CD8-positive, alpha-beta T cell (primary cell): ENCODE measurements at regions of chrX and their contacts with region 1.

Region 1: GRCh38 chrX:132488819-132489577 is at the start of gene MBNL3:
- DNase-seq: peak; percentile 47 to 85 (median 70)
- ATAC-seq: peak; percentile 71
- H3K4me3 ChIP-seq: peak within 1 kb of the TSS; percentile 61 to 77
- H3K4me3 Mint-ChIP-seq: peak within 1 kb of the TSS; percentile 95
- H3K27ac ChIP-seq: peak within 1 kb of the TSS; percentile 66 to 83
- H3K27ac Mint-ChIP-seq: peak within 1 kb of the TSS; percentile 96
- H3K4me1 ChIP-seq: peaks cover 34% of the 10 kb centered on the region
- H3K4me1 Mint-ChIP-seq: peaks cover 52% of the 10 kb centered on the region
- H3K27me3 ChIP-seq: no peaks in the 10 kb centered on the region
- H3K27me3 Mint-ChIP-seq: no peaks in the 10 kb centered on the region
- CTCF ChIP-seq: no peak
- total RNA-seq, gene MBNL3: 18.5 to 22.0 TPM

Region 2: DNA sequence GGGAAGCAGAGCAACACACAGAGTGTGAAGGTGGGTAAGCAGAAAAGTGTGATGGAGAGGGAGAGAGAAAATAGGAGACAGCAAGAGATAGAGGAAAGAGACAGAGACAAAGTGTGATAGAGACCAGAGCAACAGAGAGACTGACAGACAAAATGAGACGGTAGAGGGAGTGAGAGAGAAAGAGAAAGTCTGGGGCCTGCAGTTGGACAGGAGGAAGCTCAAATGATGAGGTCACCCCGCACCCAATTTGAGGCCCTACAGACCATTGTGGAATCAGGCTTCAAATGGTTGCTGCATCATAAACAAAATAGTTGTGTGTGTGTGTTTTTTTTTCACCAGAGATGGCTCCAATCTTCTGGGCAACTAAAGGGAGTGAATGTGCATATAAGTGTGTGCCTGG is 1478.8 kb before region 1 on chrX:
- CTCF ChIA-PET with region 1: no interaction called
- POLR2A ChIA-PET with region 1: no interaction called
- intact Hi-C with region 1: no loop called
- DNase-seq: no peak
- ATAC-seq: no peak
- H3K4me3 ChIP-seq: no peak overlapping the region
- H3K4me3 Mint-ChIP-seq: no peak overlapping the region
- H3K27ac ChIP-seq: no peak overlapping the region
- H3K27ac Mint-ChIP-seq: no peak overlapping the region
- H3K4me1 ChIP-seq: no peaks in the 10 kb centered on the region
- H3K4me1 Mint-ChIP-seq: no peaks in the 10 kb centered on the region
- H3K27me3 ChIP-seq: no peaks in the 10 kb centered on the region
- H3K27me3 Mint-ChIP-seq: no peaks in the 10 kb centered on the region
- CTCF ChIP-seq: no peak

Region 3: GRCh38 chrX:131854581-131854980 is 634.4 kb before region 1 on chrX:
- CTCF ChIA-PET with region 1: no interaction called
- POLR2A ChIA-PET with region 1: no interaction called
- intact Hi-C with region 1: loop called in 1 of 2 experiments (anchors 10 kb)
- DNase-seq: peak in 2 of 9 experiments; percentile 38 to 50
- ATAC-seq: no peak
- H3K4me3 ChIP-seq: no peak overlapping the region
- H3K4me3 Mint-ChIP-seq: no peak overlapping the region
- H3K27ac ChIP-seq: no peak overlapping the region
- H3K27ac Mint-ChIP-seq: no peak overlapping the region
- H3K4me1 ChIP-seq: no peaks in the 10 kb centered on the region
- H3K4me1 Mint-ChIP-seq: no peaks in the 10 kb centered on the region
- H3K27me3 ChIP-seq: no peaks in the 10 kb centered on the region
- H3K27me3 Mint-ChIP-seq: no peaks in the 10 kb centered on the region
- CTCF ChIP-seq: no peak

Region 4: DNA sequence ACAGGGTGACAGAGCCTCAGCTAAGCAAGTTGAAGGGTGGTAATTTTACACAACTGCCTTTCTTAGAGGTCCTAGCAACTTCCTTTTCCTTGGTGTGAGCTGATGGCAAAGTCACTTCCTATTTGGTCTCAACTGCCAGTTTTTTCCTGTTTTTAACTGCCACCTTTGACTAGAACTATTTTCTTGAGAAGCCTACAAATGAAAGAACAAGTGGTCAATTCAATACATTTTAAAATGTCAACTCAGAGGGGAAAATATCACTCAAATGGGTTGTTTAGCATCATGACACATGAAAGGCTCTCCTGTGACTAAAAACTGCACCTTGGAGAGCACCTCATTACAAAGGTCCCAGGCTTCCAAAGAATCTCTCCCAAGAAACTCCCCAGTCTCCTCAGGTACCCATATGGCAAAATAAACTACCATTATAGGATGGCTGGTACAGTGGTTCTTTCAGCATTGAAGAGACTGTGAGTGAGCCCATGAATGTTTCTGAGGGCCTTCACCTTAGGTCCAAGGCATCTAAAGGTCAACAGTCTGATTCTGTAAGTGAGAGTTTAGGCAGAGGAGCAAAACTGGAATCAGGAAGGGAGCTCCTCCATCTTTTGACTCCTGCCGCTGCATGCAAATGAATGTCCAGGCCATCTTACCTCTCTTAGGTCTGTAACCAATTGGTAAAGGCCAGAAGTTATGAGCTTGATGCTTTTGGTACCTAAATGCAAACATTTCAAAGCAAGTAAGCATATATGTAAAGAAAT is 471.4 kb before region 1 on chrX:
- CTCF ChIA-PET with region 1: no interaction called
- POLR2A ChIA-PET with region 1: no interaction called
- intact Hi-C with region 1: no loop called
- DNase-seq: no peak
- ATAC-seq: no peak
- H3K4me3 ChIP-seq: no peak overlapping the region
- H3K4me3 Mint-ChIP-seq: no peak overlapping the region
- H3K27ac ChIP-seq: peak overlapping the region in 1 of 2 experiments; percentile 39
- H3K27ac Mint-ChIP-seq: peak overlapping the region; percentile 79
- H3K4me1 ChIP-seq: peaks cover 23% of the 10 kb centered on the region
- H3K4me1 Mint-ChIP-seq: peaks cover 29% of the 10 kb centered on the region
- H3K27me3 ChIP-seq: no peaks in the 10 kb centered on the region
- H3K27me3 Mint-ChIP-seq: no peaks in the 10 kb centered on the region
- CTCF ChIP-seq: no peak

Region 5: GRCh38 chrX:132033166-132033565 is 455.8 kb before region 1 on chrX:
- CTCF ChIA-PET with region 1: no interaction called
- POLR2A ChIA-PET with region 1: no interaction called
- intact Hi-C with region 1: loop called in 1 of 2 experiments (anchors 5 kb)
- DNase-seq: no peak
- ATAC-seq: no peak
- H3K4me3 ChIP-seq: no peak overlapping the region
- H3K4me3 Mint-ChIP-seq: no peak overlapping the region
- H3K27ac ChIP-seq: no peak overlapping the region
- H3K27ac Mint-ChIP-seq: peak overlapping the region; percentile 41
- H3K4me1 ChIP-seq: peaks cover 57% of the 10 kb centered on the region
- H3K4me1 Mint-ChIP-seq: peaks cover 75% of the 10 kb centered on the region
- H3K27me3 ChIP-seq: no peaks in the 10 kb centered on the region
- H3K27me3 Mint-ChIP-seq: no peaks in the 10 kb centered on the region
- CTCF ChIP-seq: no peak

Region 6: GRCh38 chrX:132266583-132267355 is 222.2 kb before region 1 on chrX:
- CTCF ChIA-PET with region 1: no interaction called
- POLR2A ChIA-PET with region 1: no interaction called
- intact Hi-C with region 1: no loop called
- DNase-seq: no peak
- ATAC-seq: no peak
- H3K4me3 ChIP-seq: no peak overlapping the region
- H3K4me3 Mint-ChIP-seq: no peak overlapping the region
- H3K27ac ChIP-seq: no peak overlapping the region
- H3K27ac Mint-ChIP-seq: no peak overlapping the region
- H3K4me1 ChIP-seq: no peaks in the 10 kb centered on the region
- H3K4me1 Mint-ChIP-seq: no peaks in the 10 kb centered on the region
- H3K27me3 ChIP-seq: no peaks in the 10 kb centered on the region
- H3K27me3 Mint-ChIP-seq: no peaks in the 10 kb centered on the region
- CTCF ChIP-seq: no peak

Region 7: DNA sequence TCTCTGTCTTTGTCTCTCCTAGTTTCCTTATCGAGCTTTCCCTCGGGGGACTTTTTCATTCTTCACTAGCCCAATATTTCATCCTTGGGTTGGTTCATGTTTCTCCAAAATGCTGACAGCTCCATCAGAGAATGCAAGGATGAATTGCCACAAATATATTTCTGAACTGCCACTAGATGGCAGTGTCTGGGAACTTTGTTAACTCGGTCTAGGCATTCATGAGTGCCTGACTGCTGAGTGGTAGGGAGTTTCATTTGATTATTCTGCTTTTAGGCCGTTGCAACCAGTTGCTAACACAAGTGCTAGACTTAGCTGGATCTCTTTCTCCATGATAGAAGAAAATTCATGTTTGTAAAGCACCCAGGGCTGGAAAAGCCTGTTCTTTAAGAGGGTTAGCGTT is 196.2 kb before region 1 on chrX:
- CTCF ChIA-PET with region 1: interaction called, 6 read pairs
- POLR2A ChIA-PET with region 1: no interaction called
- intact Hi-C with region 1: loop called (anchors 10 kb)
- DNase-seq: peak in 7 of 9 experiments; percentile 0 to 65 (median 26)
- ATAC-seq: no peak
- H3K4me3 ChIP-seq: no peak overlapping the region
- H3K4me3 Mint-ChIP-seq: no peak overlapping the region
- H3K27ac ChIP-seq: no peak overlapping the region
- H3K27ac Mint-ChIP-seq: no peak overlapping the region
- H3K4me1 ChIP-seq: no peaks in the 10 kb centered on the region
- H3K4me1 Mint-ChIP-seq: no peaks in the 10 kb centered on the region
- H3K27me3 ChIP-seq: no peaks in the 10 kb centered on the region
- H3K27me3 Mint-ChIP-seq: no peaks in the 10 kb centered on the region
- CTCF ChIP-seq: peak; percentile 42

Region 8: DNA sequence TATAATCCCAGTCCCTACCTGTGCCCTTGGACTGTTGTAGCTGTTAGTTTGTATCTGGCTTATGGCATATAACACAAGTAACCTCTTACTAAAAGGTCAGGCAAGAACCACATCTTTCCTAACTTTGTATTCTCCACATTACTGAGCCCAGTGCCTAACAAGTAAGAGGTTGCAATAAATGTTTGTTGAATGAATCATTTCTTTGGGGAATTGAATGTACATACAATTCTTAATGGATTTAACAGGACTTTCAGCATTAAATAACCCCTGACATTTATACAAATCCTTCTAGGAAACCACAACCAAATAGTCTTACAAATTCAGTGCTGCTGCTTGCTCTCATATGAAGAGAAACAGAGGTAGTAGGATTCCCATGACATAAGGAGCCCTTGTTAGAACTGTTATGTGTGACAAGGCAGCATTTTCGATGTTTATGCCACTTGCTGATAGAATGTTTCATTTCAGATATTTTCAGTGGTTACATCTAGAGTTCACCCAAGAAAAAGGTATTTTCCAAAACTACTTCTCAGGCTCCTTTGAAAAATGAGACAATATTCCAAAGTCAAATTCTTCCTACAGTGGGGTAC is 62.2 kb before region 1 on chrX:
- CTCF ChIA-PET with region 1: no interaction called
- POLR2A ChIA-PET with region 1: no interaction called
- intact Hi-C with region 1: loop called in 1 of 2 experiments (anchors 10 kb)
- DNase-seq: no peak
- ATAC-seq: no peak
- H3K4me3 ChIP-seq: no peak overlapping the region
- H3K4me3 Mint-ChIP-seq: no peak overlapping the region
- H3K27ac ChIP-seq: no peak overlapping the region
- H3K27ac Mint-ChIP-seq: no peak overlapping the region
- H3K4me1 ChIP-seq: no peaks in the 10 kb centered on the region
- H3K4me1 Mint-ChIP-seq: peaks cover 12% of the 10 kb centered on the region
- H3K27me3 ChIP-seq: no peaks in the 10 kb centered on the region
- H3K27me3 Mint-ChIP-seq: no peaks in the 10 kb centered on the region
- CTCF ChIP-seq: no peak

Region 9: DNA sequence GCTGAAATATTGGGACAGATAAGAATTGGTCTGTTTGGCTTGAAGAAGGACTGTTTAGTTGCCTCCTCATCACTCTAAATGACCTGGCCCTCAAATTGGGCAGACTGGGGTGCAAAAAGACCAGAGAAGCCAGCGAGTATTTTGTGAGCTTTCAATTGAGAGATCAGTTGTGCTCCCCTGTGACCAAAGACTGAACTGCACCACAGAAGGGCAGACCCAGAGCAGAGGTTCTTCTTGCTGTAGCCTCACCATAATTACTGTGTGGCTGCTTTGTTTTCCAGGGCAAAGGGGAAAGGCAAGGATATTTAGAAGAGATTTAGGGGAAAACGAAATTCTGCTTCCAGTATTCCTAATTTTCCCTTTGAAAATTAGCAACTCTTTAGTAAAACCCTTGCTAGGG is 103.9 kb after region 1 on chrX:
- CTCF ChIA-PET with region 1: no interaction called
- POLR2A ChIA-PET with region 1: no interaction called
- intact Hi-C with region 1: loop called in 1 of 2 experiments (anchors 5 kb)
- DNase-seq: peak in 2 of 9 experiments; percentile 17 to 30
- ATAC-seq: no peak
- H3K4me3 ChIP-seq: no peak overlapping the region
- H3K4me3 Mint-ChIP-seq: no peak overlapping the region
- H3K27ac ChIP-seq: no peak overlapping the region
- H3K27ac Mint-ChIP-seq: no peak overlapping the region
- H3K4me1 ChIP-seq: no peaks in the 10 kb centered on the region
- H3K4me1 Mint-ChIP-seq: no peaks in the 10 kb centered on the region
- H3K27me3 ChIP-seq: no peaks in the 10 kb centered on the region
- H3K27me3 Mint-ChIP-seq: no peaks in the 10 kb centered on the region
- CTCF ChIP-seq: no peak

Region 10: DNA sequence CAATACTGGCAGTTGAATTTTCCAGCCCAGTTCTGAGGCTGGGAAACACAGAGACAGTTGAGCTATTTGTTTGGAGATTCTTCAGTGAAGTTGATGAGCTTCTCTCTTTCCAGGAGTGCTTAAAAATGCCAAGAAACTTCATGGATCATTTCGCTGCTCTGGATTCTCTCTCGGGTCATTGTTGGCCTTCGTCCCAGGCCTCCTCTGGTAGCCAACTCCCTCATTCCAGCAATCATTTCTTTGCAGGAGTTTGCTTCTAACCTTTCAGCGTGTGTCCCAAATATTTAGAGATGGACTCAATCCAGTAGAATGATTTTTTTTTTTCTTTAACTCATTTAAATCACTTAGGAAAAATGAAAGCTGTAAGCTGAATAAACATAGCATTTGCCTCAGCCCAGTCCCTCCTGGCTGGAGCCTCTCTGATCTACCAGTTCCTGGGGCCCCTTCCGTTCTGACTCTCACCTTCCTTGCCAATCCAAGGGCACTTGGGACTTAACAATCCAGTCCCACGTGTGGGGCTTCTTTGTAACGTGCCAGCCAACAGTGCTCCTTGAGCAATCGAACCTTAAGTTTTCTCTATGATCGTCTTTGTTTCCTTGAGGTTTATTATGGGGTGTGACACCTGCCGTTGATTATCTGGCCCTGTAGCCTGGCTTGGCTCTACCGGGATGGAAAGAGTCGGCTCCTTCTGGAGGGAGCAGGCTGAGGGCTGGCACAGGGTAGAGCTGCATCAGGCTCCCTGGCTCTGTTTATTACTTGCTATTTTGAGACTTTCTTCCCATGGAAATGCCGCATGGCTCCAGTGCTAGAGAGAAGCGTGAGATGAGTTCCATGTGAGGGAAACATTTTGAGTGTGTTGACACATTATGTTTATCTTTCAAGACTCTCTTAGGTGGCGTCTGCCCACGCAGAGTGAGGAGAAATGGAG is 1006.7 kb after region 1 on chrX:
- CTCF ChIA-PET with region 1: no interaction called
- POLR2A ChIA-PET with region 1: no interaction called
- intact Hi-C with region 1: no loop called
- DNase-seq: no peak
- ATAC-seq: no peak
- H3K4me3 ChIP-seq: no peak overlapping the region
- H3K4me3 Mint-ChIP-seq: no peak overlapping the region
- H3K27ac ChIP-seq: no peak overlapping the region
- H3K27ac Mint-ChIP-seq: no peak overlapping the region
- H3K4me1 ChIP-seq: no peaks in the 10 kb centered on the region
- H3K4me1 Mint-ChIP-seq: no peaks in the 10 kb centered on the region
- H3K27me3 ChIP-seq: no peaks in the 10 kb centered on the region
- H3K27me3 Mint-ChIP-seq: no peaks in the 10 kb centered on the region
- CTCF ChIP-seq: no peak